ENCODE measurements at regions of chr5 and their contacts with region 1.

Region 1: GRCh38 chr5:59069438-59070079 is 486.7 kb downstream of the RAB3C start:
- DNase-seq: peak; percentile 93

Region 2: GRCh38 chr5:58188262-58188651 is 881.3 kb before region 1 on chr5:
- in situ Hi-C with region 1: loop called (anchors 25 kb)
- DNase-seq: peak; percentile 95

Region 3: GRCh38 chr5:59007460-59008063 is 62.0 kb before region 1 on chr5:
- in situ Hi-C with region 1: no loop called
- DNase-seq: no peak

Measured in Caki2 (cell line).